Panc1 (cell line): ENCODE measurements at regions of chr7 and their contacts with region 1.

Region 1: GRCh38 chr7:11831736-11832495 is at the start of gene THSD7A:
- DNase-seq: no peak
- ATAC-seq: peak; percentile 91
- H3K4me3 ChIP-seq: peak within 1 kb of the TSS; percentile 74 to 76
- H3K27ac ChIP-seq: peak within 1 kb of the TSS; percentile 94
- H3K4me1 ChIP-seq: peaks cover 37% of the 10 kb centered on the region
- H3K27me3 ChIP-seq: no peaks in the 10 kb centered on the region
- CTCF ChIP-seq: peak; percentile 62
- total RNA-seq, gene THSD7A: 38.6 TPM

Region 2: GRCh38 chr7:11427686-11428273 is 404.1 kb before region 1 on chr7:
- CTCF ChIA-PET with region 1: no interaction called
- POLR2A ChIA-PET with region 1: no interaction called
- in situ Hi-C with region 1: no loop called
- intact Hi-C with region 1: loop called (anchors 5 kb)
- DNase-seq: peak; percentile 59
- ATAC-seq: peak; percentile 92
- H3K4me3 ChIP-seq: no peak overlapping the region
- H3K27ac ChIP-seq: peak overlapping the region; percentile 44; the same call in 1 of the 2 replicates
- H3K4me1 ChIP-seq: peaks cover 11% of the 10 kb centered on the region; the same call in 1 of the 2 replicates
- H3K27me3 ChIP-seq: no peaks in the 10 kb centered on the region
- CTCF ChIP-seq: peak; percentile 82; the same call in 1 of the 2 replicates

Region 3: GRCh38 chr7:11951909-11952308 is 120.0 kb after region 1 on chr7:
- CTCF ChIA-PET with region 1: no interaction called
- POLR2A ChIA-PET with region 1: no interaction called
- in situ Hi-C with region 1: no loop called
- intact Hi-C with region 1: no loop called
- DNase-seq: no peak
- ATAC-seq: no peak
- H3K4me3 ChIP-seq: no peak overlapping the region
- H3K27ac ChIP-seq: no peak overlapping the region
- H3K4me1 ChIP-seq: no peaks in the 10 kb centered on the region
- H3K27me3 ChIP-seq: no peaks in the 10 kb centered on the region
- CTCF ChIP-seq: no peak

Region 4: DNA sequence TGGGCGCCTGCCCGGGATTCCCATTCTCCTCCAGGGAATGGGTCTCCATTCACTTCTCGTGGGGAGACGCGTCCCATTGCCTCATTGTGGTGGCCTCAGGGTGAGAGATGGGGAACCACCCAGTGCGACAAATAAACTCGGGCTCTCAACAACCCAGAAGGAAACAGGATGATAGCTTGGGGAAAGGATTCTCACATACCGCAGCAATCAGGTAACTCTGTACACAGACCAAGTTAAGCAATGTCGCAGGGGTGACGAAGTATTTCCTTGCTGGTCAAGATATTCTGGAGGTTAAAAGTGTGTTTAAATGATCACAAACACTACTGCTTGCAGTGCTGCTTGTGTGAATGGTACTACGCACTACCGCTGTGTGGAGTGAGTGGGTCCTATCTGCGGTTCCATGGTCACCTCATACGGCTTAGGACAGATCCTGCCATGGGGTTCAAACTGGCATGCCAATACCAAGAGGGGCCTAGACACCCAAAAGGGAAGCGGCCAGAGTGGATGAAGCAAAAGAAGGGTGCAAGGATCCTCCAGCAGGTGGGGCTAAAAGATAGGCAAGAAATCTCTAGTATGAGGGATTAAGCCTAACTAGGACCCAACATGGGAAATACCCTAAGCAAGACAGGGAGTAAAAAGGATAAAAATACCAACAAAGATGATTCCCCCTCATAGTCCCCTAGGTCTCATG is 235.4 kb after region 1 on chr7:
- CTCF ChIA-PET with region 1: no interaction called
- POLR2A ChIA-PET with region 1: no interaction called
- in situ Hi-C with region 1: no loop called
- intact Hi-C with region 1: loop called (anchors 10 kb)
- DNase-seq: no peak
- ATAC-seq: peak; percentile 70; the same call in 1 of the 2 replicates
- H3K4me3 ChIP-seq: no peak overlapping the region
- H3K27ac ChIP-seq: peak overlapping the region; percentile 60; the same call in 1 of the 2 replicates
- H3K4me1 ChIP-seq: peaks cover 10% of the 10 kb centered on the region
- H3K27me3 ChIP-seq: no peaks in the 10 kb centered on the region
- CTCF ChIP-seq: peak; percentile 76

Region 5: GRCh38 chr7:12211054-12211710 is 379.3 kb after region 1 on chr7 and contains the start of gene TMEM106B:
- CTCF ChIA-PET with region 1: no interaction called
- POLR2A ChIA-PET with region 1: no interaction called
- in situ Hi-C with region 1: no loop called
- intact Hi-C with region 1: loop called (anchors 1 kb)
- DNase-seq: peak; percentile 96
- ATAC-seq: peak; percentile 94
- H3K4me3 ChIP-seq: peak within 1 kb of the TSS; percentile 83 to 90
- H3K27ac ChIP-seq: peak within 1 kb of the TSS; percentile 100
- H3K4me1 ChIP-seq: peaks cover 58% of the 10 kb centered on the region
- H3K27me3 ChIP-seq: no peaks in the 10 kb centered on the region
- CTCF ChIP-seq: no peak; the same call in 1 of the 2 replicates
- total RNA-seq, gene TMEM106B: 89.0 TPM

Region 6: GRCh38 chr7:12490117-12490688 is 658.3 kb after region 1 on chr7:
- CTCF ChIA-PET with region 1: no interaction called
- POLR2A ChIA-PET with region 1: no interaction called
- in situ Hi-C with region 1: no loop called
- intact Hi-C with region 1: loop called (anchors 2 kb)
- DNase-seq: no peak
- ATAC-seq: peak; percentile 76; the same call in 1 of the 2 replicates
- H3K4me3 ChIP-seq: no peak overlapping the region
- H3K27ac ChIP-seq: no peak overlapping the region
- H3K4me1 ChIP-seq: no peaks in the 10 kb centered on the region
- H3K27me3 ChIP-seq: no peaks in the 10 kb centered on the region
- CTCF ChIP-seq: peak; percentile 65; the same call in 1 of the 2 replicates